Activated CD4-positive, alpha-beta T cell treated with anti-CD3 and anti-CD28 coated beads, Interleukin-2, amount 10 ng/mL, durations not matched to agents 24 days and 14 days (primary cell): ENCODE measurements at regions of chr19 and their contacts with region 1.

Region 1: GRCh38 chr19:37655689-37656371 is 565 bp upstream of the ZFP30 start:
- DNase-seq: peak; percentile 96
- H3K4me3 Mint-ChIP-seq: peak overlapping the region; percentile 99
- H3K27ac Mint-ChIP-seq: peak overlapping the region; percentile 98
- H3K4me1 Mint-ChIP-seq: peaks cover 28% of the 10 kb centered on the region
- H3K27me3 Mint-ChIP-seq: no peaks in the 10 kb centered on the region

Region 2: GRCh38 chr19:37779127-37780005 is 123.5 kb after region 1 on chr19 and contains the start of gene ZNF573:
- intact Hi-C with region 1: loop called (anchors 1 kb)
- DNase-seq: peak; percentile 93
- H3K4me3 Mint-ChIP-seq: peak within 1 kb of the TSS; percentile 96
- H3K27ac Mint-ChIP-seq: peak within 1 kb of the TSS; percentile 92
- H3K4me1 Mint-ChIP-seq: peaks cover 11% of the 10 kb centered on the region
- H3K27me3 Mint-ChIP-seq: no peaks in the 10 kb centered on the region
- total RNA-seq, gene ZNF573: 6.5 and 6.8 TPM in 2 replicates